Transverse colon (tissue), 4 donors: ENCODE measurements at regions of chr12 and their contacts with region 1.

Region 1: DNA sequence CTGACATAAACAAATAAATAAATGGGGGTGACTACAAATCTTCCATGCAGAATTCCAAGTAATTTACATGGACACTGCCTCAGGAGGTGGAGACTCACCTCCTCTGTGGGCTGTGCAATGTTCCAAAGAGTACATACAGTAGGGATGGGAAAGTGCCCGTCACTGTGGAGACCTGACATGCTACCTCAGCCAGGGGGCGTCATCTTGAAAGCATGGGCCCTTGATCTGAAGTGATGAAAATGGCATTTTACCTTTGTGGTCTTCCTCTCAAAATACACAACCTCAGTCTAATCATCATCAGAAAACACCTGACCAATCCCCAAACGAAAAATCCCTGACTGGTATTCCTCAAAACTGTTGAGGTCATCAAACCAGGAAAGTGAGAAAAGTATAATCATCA is 48.4 kb downstream of the ANAPC7 start:
- DNase-seq: no peak
- H3K4me3 ChIP-seq: no peak overlapping the region
- H3K27ac ChIP-seq: no peak overlapping the region
- H3K4me1 ChIP-seq: peaks cover 0 to 6% (median 0%) of the 10 kb centered on the region in 4 donors
- H3K27me3 ChIP-seq: no peaks in the 10 kb centered on the region
- CTCF ChIP-seq: peak in 2 of 5 experiments; percentile 16 to 29
- EP300 ChIP-seq: no peak
- POLR2A ChIP-seq: no peak

Region 2: DNA sequence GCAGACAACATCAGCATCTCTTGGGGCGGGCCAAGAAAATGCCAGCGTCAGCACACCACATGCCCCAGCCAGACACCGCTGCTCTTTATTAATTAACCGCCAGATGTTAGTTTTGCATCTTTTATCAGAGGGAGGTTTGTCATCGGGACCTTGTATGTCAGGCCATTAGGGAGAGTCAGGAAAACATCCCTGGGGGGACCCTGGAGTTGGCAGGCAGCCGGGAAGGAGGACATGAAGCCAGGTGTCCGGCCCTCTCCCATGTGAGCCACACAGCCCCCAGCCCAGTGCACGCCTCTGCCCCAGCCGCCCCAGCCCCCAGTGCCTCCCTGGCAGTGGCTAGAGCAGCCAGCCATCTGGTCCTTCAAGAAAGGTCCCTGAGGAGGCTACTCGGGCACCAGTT is 698.3 kb before region 1 on chr12:
- in situ Hi-C with region 1: no loop called
- intact Hi-C with region 1: no loop called
- DNase-seq: no peak
- H3K4me3 ChIP-seq: no peak overlapping the region
- H3K27ac ChIP-seq: no peak overlapping the region
- H3K4me1 ChIP-seq: no peaks in the 10 kb centered on the region
- H3K27me3 ChIP-seq: no peaks in the 10 kb centered on the region
- CTCF ChIP-seq: no peak
- EP300 ChIP-seq: no peak
- POLR2A ChIP-seq: no peak

Region 3: DNA sequence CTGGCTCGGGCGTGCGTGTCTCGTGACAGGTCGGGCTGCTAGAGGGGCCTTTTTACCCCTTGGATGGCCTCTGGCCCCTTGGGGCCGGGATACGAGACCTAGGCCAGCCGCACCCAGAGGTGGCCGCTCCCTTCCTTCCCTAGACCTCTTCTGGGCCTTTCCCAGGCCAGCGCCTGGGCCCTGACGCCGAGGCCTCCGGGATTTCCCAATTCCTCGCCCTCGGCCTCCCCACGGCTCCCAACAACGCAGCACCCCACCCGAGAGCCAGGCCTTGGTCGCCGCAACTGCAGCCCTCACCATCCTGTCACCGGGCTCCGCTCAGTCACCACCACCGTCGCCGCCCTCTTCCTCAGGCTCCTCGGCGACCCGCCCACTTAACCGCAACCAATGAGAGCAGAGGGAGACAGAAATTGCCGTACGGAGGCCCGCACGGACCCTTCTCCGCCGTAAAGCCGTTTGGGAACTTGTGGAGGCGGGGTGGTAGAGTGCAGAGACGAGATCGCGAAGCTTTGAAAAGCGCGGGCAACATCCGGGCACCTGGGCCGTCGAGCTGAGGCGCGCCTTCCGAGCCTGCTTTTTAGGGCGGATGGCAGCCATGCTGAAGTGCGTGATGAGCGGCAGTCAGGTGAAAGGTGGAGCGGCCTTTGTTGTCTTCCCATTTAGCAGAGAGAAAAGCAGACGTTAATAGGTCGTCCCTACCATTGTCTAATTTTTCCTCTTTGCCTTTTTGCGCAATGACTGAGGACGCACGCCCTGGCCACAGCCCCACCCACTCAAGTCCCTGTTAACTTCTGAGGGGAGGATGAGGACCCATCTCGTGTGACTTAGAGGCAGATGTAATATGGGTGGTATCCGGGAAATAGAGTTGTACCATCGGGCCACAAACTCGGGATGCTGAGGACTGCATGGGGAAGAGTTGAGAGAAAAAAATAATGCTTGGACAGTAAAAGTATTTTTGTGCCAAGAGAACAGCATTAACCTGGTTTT is 147.0 kb after region 1 on chr12 and contains the starts of genes RAD9B and VPS29:
- in situ Hi-C with region 1: no loop called
- intact Hi-C with region 1: no loop called
- DNase-seq: peak; percentile 99
- H3K4me3 ChIP-seq: peak within 1 kb of the TSS; percentile 57 to 89 (median 83)
- H3K27ac ChIP-seq: peak within 1 kb of the TSS; percentile 90 to 98 (median 93)
- H3K4me1 ChIP-seq: peaks cover 18 to 33% (median 25%) of the 10 kb centered on the region in 4 donors
- H3K27me3 ChIP-seq: no peaks in the 10 kb centered on the region
- CTCF ChIP-seq: peak in 1 of 5 experiments; percentile 11
- EP300 ChIP-seq: no peak
- POLR2A ChIP-seq: peak; percentile 97
- total RNA-seq, gene RAD9B: 0.27 to 0.32 TPM in 2 of 4 donors, not detected in the others
- total RNA-seq, gene VPS29: 16.3 to 142 (median 79.3) TPM

Region 4: DNA sequence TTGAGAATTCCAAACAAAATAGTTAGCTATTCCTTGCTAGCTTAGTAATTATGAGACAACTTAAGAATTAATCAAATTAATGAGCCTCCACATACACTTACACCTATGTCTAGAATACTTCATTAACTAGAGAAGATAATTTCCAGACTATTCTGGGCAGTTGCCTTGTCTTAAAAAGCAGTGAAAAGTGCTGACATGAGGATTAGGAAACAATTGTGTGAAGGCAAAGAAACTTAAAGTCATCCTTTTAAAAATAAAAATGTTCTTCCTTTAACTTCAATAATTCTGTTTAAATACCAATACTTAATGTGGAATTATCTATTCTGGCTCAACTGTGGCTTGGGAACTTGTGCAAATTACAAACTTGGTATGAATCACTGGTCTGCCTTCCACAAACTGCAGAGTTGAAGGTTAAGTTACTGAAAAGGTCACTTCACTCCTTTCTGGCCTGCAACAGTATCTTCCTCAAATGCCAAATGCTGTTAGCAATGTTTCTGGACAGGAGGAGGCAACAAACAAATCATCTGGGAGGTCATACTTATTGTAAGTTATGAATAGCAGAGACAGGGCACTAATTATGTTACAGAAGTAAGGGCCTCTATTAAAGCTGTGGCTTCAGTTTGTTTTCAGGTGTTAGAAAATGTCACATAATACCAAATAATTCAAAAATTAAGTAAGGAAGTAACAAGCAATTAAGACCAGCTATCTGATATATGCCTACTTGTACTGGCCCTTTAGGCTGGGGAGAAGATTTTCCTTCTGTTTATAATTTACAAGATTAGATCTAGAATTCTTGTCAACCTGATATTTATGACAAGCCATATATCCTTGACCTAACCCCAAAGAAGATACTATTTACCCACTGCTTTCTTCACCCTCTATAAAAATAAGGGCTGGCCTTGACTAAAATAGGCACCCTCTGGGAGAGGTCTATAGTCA is 208.9 kb after region 1 on chr12:
- in situ Hi-C with region 1: no loop called
- intact Hi-C with region 1: no loop called
- DNase-seq: no peak
- H3K4me3 ChIP-seq: no peak overlapping the region
- H3K27ac ChIP-seq: peak overlapping the region; percentile 54 to 59 (median 56)
- H3K4me1 ChIP-seq: peaks cover 5 to 65% (median 37%) of the 10 kb centered on the region in 4 donors
- H3K27me3 ChIP-seq: no peaks in the 10 kb centered on the region
- CTCF ChIP-seq: no peak
- EP300 ChIP-seq: no peak
- POLR2A ChIP-seq: no peak

Region 5: DNA sequence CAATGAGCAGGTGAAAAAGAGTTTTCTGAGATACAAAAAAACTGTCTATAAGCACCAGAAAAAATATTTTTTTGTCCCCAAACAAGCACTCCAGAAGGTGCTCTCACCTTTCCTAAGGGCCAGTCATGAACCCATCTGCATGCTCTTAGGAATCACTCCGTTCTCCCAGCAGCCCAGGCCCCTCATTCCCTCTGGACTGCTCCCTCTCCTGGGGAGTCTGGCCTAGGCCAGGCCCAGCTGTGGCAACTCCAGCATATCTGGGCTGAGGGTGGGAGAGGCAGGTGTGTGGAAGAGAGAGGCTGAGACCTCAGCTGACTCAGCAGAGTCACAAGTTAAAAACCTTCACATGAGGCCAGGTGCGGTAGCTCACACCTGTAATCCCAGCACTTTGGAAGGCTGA is 1824.8 kb after region 1 on chr12:
- in situ Hi-C with region 1: no loop called
- intact Hi-C with region 1: loop called (anchors 5 kb)
- DNase-seq: no peak
- H3K4me3 ChIP-seq: no peak overlapping the region
- H3K27ac ChIP-seq: no peak overlapping the region
- H3K4me1 ChIP-seq: no peaks in the 10 kb centered on the region
- H3K27me3 ChIP-seq: no peaks in the 10 kb centered on the region
- CTCF ChIP-seq: no peak
- EP300 ChIP-seq: no peak
- POLR2A ChIP-seq: no peak